ENCODE measurements at regions of chr19 and their contacts with region 1.

Region 1: DNA sequence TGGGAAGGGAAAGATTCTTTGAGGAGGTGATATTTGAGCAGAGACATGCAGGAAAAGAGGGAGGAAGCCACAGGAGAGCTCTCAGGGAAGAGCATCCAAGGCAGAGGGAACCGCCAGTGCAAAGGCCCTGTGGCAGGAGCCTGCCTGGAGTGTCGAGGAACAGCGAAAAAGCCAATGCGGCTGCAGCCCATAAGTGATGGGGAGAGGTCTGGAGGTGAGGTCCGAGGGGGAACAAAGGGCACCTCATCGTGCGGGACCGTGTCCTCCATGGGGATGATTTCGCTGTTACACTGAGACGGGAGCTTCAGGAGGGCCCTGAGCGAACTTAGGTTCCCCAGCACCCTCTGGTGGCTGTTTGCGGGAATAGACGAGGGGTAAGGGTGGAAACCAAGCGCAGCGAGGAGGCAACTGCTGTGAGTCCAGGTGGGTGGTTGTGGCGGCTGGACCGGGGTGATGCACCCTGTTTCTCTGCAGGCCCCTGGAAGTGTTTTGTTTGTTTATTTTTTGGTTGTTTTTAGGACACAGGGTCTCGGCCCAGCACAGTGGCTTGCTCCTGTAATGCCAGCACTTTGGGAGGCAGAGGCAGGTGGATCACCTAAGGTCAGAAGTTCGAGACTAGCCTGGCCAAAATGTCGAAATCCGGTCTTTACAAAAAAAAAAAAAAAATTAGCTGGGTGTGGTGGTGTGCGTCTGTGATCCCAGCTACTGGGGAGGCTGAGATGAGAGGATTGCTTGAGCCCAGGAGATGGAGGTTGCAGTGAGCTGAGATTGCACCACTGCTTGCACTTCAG is 5.9 kb upstream of the EHD2 start:
- DNase-seq: peak in 1 of 2 donors; percentile 86
- H3K4me3 ChIP-seq: no peak overlapping the region
- H3K27ac ChIP-seq: no peak overlapping the region
- H3K4me1 ChIP-seq: no peaks in the 10 kb centered on the region
- H3K27me3 ChIP-seq: no peaks in the 10 kb centered on the region
- CTCF ChIP-seq: peak; percentile 66 to 81 (median 79)

Region 2: DNA sequence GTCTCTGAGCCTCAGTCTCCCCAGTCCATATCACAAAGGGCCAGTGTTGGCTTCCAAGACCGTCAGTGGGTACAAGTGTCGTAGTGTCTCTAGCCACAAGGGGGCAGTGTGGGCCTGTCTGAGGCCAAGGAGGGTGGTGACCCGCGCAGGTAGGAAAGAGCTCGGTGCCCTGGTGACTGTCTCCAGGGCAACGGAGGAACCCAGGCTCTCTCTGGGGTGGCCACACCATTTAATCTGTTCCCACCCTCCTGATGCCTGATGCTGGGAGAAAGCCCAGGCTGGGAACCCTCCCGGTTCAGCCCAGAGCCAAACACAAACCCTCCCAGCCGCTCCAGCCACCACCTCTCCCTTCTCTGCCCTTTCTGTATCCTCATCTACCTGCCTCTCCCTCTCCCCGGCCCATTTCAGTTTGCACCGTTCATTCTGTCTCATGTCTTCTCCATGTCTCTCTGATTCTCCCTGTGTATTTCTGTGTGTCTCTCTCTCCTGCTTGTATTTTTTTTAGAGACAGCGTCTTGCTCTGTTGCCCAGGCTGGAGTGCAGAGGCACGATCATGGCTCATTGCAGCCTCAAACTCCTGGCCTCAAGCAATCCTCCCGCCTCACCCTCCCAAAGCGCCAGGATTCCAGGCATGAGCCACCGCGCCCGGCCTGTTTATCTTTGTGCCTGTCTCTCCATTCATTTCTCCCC is 270.5 kb before region 1 on chr19:
- intact Hi-C with region 1: loop called (anchors 1 kb)
- DNase-seq: peak in 1 of 2 donors; percentile 86
- H3K4me3 ChIP-seq: no peak overlapping the region
- H3K27ac ChIP-seq: no peak overlapping the region
- H3K4me1 ChIP-seq: no peaks in the 10 kb centered on the region
- H3K27me3 ChIP-seq: peaks cover 5% of the 10 kb centered on the region
- CTCF ChIP-seq: peak; percentile 81 to 92 (median 92)

Region 3: DNA sequence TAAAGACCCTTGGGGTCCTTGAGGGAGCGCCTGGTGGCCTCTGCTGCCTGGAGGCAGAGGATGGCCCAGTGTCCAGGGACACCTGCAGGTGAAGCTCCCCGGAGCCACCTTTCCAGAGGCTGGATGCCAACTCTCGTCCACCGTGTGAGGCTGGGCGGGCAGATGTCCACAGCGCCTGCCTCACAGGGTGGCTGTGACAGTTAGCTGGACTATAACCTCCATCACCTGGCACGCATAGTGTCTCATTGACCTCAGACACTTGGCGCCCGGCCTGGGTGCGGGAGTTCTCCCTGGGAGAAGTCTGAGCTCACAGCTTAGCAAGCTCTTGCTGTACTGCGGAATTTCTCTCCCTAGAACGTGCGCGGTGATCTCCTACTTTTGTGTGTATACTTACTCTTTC is 88.6 kb before region 1 on chr19:
- intact Hi-C with region 1: no loop called
- DNase-seq: no peak
- H3K4me3 ChIP-seq: no peak overlapping the region
- H3K27ac ChIP-seq: no peak overlapping the region
- H3K4me1 ChIP-seq: no peaks in the 10 kb centered on the region
- H3K27me3 ChIP-seq: no peaks in the 10 kb centered on the region
- CTCF ChIP-seq: no peak

Region 4: DNA sequence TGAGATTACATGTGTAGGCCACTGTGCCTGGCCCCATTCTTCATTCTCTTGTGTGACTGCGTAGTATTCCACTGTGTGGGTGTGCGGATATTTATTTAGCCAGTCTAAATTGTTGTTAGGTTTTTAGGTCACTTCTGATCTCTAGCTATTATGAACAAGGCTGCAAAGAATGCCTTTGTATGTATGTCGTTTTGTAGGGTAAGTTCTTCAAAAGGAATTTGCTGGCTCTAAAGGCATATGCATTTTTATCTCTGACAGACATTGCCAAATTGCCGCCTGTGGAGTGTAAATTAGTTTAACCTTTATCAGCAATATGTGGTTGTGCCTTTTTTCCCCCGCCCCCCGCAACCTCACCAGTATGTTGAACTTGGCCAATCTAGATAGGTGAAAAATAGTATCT is 24.4 kb before region 1 on chr19:
- intact Hi-C with region 1: no loop called
- DNase-seq: no peak
- H3K4me3 ChIP-seq: no peak overlapping the region
- H3K27ac ChIP-seq: no peak overlapping the region
- H3K4me1 ChIP-seq: no peaks in the 10 kb centered on the region
- H3K27me3 ChIP-seq: no peaks in the 10 kb centered on the region
- CTCF ChIP-seq: no peak